PC-9 (cell line): ENCODE measurements at regions of chr12 and their contacts with region 1.

Region 1: GRCh38 chr12:32780071-32780470 is 24.4 kb upstream of the YARS2 start:
- DNase-seq: no peak
- H3K4me3 ChIP-seq: no peak overlapping the region
- H3K27ac ChIP-seq: no peak overlapping the region
- H3K4me1 ChIP-seq: no peaks in the 10 kb centered on the region
- H3K27me3 ChIP-seq: no peaks in the 10 kb centered on the region
- CTCF ChIP-seq: no peak

Region 2: DNA sequence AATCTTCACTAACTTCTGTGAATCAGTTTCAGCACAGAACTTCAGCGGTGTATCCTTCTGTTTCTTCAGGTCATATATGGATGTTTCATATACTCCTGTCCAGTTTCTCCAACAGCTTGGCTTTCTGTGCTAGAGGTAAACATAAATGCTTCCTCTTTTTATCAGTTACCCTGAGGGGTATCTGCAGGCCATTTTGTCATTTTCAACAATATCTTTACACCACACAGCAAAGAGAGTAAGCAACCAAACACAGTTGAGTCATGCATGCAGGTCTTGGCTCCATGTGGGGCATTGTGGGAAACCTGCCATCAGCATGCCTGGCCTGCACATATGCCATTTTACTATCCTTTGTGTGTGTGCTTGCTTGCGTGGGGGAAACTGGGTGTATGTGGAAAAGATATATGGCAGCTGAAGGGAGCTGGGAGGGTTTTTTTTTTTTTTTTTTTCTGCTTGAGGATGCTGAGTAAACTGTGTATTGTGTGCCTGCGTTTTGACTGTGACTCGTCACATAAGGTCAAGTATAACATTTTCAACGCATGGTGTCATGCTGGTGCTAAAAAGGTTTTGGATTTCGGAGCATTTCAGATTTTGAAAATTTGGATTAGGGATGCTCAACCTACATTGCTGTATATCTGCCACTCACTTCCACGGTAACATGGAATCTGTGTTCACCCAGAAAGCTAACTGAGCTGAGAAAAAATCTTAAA is 31.8 kb after region 1 on chr12:
- CTCF ChIA-PET with region 1: no interaction called
- POLR2A ChIA-PET with region 1: interaction called, 11 read pairs
- intact Hi-C with region 1: no loop called
- DNase-seq: peak in 1 of 2 experiments; percentile 18
- H3K4me3 ChIP-seq: no peak overlapping the region
- H3K27ac ChIP-seq: no peak overlapping the region
- H3K4me1 ChIP-seq: no peaks in the 10 kb centered on the region
- H3K27me3 ChIP-seq: no peaks in the 10 kb centered on the region
- CTCF ChIP-seq: no peak